ENCODE measurements at regions of chr7 and their contacts with region 1.

Region 1: DNA sequence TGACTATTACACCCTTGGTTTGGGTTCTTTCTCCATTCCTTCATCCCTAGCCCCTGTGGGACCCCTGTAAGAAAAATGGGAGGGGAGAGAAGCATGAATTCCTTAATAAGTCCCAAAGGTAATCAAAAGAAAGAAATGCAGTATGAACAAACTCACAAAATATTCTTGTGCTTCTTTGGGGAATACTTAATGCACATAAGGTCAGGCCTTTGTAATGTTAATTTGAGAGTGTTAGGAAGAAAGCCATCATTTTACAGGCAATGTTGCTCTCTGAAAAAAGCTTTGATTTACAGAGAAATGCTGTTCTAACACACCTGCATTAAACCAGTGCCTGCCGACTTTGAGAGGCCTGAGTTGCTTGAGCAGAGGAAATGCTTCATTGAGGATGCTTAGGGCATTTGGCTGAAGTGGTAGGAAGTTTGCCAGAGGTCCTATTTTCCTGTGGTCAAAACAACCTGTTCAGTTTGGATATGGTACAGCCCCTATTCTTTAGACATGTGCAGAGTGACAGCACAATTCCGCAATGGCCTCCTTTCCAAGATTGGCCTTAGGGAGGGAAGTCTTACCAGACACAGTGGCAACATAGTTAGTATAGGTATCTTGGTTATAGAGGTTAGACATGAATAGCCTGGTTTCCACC is 643.4 kb downstream of the AUTS2 start:
- DNase-seq: no peak
- H3K4me3 ChIP-seq: no peak overlapping the region
- CTCF ChIP-seq: no peak

Region 2: GRCh38 chr7:70298780-70299481 is 57.3 kb after region 1 on chr7:
- in situ Hi-C with region 1: no loop called
- DNase-seq: no peak
- H3K4me3 ChIP-seq: no peak overlapping the region
- CTCF ChIP-seq: no peak

Region 3: GRCh38 chr7:70312336-70312735 is 70.7 kb after region 1 on chr7:
- in situ Hi-C with region 1: loop called (anchors 5 kb)
- DNase-seq: no peak
- H3K4me3 ChIP-seq: no peak overlapping the region
- CTCF ChIP-seq: no peak